MCF 10A (cell line): ENCODE measurements at regions of chr6 and their contacts with region 1.

Region 1: DNA sequence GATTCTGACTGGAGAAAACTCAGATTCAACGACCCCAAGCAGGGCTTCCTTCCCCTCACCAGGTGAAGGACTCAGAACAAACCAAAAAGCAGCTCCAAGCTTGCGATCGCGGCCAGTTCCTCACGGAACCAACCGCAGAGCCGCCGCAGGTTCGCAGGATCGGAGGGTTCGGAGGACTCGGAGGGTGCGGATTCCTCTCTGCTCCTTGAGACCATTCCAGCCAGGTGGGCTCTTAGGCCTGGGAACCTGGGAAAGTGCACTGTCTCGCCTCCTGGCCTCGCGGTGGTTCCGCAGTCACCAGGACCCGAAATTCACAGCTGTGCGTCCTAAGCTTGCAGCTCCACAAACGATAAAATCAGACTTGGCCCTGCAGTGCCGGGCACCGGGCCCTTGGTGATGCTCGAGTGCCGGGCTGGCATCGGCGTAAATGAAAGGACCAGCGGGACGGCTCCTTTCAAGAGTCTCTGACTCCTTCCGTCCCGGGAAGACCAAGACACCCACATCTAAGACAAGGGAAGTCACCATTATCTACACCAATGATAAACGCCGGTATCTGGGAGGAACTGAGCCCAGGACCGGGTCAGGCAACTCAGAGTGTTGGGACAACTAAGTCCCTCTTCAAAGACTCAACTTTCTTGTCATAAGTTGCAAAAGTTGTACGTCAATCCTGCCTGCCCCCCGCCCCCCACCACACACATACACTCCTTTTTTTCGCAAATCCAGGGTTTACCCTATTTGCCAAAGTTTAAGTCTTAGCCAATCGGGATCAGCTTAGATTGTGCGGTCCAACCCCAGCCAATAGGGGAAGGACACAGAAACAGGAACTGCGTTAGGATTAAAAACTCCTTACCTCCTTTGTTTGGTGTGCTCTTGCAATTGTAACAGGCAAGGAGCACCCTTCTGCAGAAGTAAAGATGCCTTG is 69.8 kb upstream of the PRSS16 start:
- DNase-seq: peak; percentile 92
- H3K4me3 Mint-ChIP-seq: peak overlapping the region; percentile 87
- H3K27ac Mint-ChIP-seq: peak overlapping the region; percentile 92
- H3K4me1 Mint-ChIP-seq: no peaks in the 10 kb centered on the region
- H3K27me3 Mint-ChIP-seq: no peaks in the 10 kb centered on the region
- CTCF ChIP-seq: peak; percentile 36

Region 2: GRCh38 chr6:27126815-27127537 is 50.8 kb before region 1 on chr6:
- CTCF ChIA-PET with region 1: interaction called, 3 read pairs
- POLR2A ChIA-PET with region 1: interaction called, 30 read pairs
- intact Hi-C with region 1: no loop called
- DNase-seq: peak; percentile 91
- H3K4me3 Mint-ChIP-seq: peak overlapping the region; percentile 71
- H3K27ac Mint-ChIP-seq: peak overlapping the region; percentile 54
- H3K4me1 Mint-ChIP-seq: peaks cover 7% of the 10 kb centered on the region
- H3K27me3 Mint-ChIP-seq: no peaks in the 10 kb centered on the region
- CTCF ChIP-seq: peak; percentile 66

Region 3: GRCh38 chr6:27157459-27158315 is 20.1 kb before region 1 on chr6:
- CTCF ChIA-PET with region 1: interaction called, 10 read pairs
- POLR2A ChIA-PET with region 1: interaction called, 17 read pairs
- intact Hi-C with region 1: loop called (anchors 1 kb)
- DNase-seq: peak; percentile 66
- H3K4me3 Mint-ChIP-seq: peak overlapping the region; percentile 80
- H3K27ac Mint-ChIP-seq: peak overlapping the region; percentile 53
- H3K4me1 Mint-ChIP-seq: peaks cover 29% of the 10 kb centered on the region
- H3K27me3 Mint-ChIP-seq: no peaks in the 10 kb centered on the region
- CTCF ChIP-seq: peak; percentile 31

Region 4: GRCh38 chr6:27213544-27214125 is 35.9 kb after region 1 on chr6:
- CTCF ChIA-PET with region 1: interaction called, 3 read pairs
- POLR2A ChIA-PET with region 1: interaction called, 3 read pairs
- intact Hi-C with region 1: loop called (anchors 1 kb)
- DNase-seq: peak; percentile 68
- H3K4me3 Mint-ChIP-seq: peak overlapping the region; percentile 88
- H3K27ac Mint-ChIP-seq: no peak overlapping the region
- H3K4me1 Mint-ChIP-seq: no peaks in the 10 kb centered on the region
- H3K27me3 Mint-ChIP-seq: no peaks in the 10 kb centered on the region
- CTCF ChIP-seq: no peak

Region 5: DNA sequence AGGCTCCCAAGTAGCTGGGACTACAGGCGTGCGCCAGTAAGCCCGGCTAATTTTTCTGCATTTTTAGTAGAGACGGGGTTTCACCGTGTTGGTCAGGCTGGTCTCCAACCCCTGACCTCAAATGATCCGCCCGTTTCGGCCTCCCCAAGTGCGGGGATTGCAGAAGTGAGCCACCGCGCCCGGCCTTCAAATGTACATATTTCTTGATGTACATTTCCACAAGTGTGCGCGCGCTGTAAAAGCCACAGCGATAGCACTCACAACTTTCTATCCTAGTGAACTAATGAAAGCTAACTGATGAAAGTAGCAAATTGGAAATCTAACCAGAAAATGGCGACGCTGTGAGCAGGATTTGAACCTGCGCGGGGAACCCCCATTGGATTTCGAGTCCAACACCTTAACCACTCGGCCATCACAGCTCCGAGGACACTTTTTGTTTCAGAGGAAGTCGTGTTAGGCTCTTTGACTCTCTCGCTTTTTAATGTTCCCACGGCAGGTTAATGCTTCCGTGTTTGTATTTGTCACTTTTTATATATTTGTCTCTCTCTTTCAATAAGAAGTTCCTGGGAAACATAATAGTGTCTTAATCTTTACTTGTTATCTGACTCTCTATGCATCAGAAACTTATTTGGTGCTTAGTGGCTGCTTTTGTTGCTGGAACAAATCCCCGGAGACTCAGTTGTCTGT is 494.5 kb after region 1 on chr6:
- CTCF ChIA-PET with region 1: interaction called, 7 read pairs
- POLR2A ChIA-PET with region 1: interaction called, 11 read pairs
- intact Hi-C with region 1: no loop called
- DNase-seq: peak; percentile 84
- H3K4me3 Mint-ChIP-seq: peak overlapping the region; percentile 76
- H3K27ac Mint-ChIP-seq: peak overlapping the region; percentile 77
- H3K4me1 Mint-ChIP-seq: peaks cover 12% of the 10 kb centered on the region
- H3K27me3 Mint-ChIP-seq: no peaks in the 10 kb centered on the region
- CTCF ChIP-seq: no peak